CD4-positive, alpha-beta memory T cell (primary cell): ENCODE measurements at regions of chr5 and their contacts with region 1.

Region 1: DNA sequence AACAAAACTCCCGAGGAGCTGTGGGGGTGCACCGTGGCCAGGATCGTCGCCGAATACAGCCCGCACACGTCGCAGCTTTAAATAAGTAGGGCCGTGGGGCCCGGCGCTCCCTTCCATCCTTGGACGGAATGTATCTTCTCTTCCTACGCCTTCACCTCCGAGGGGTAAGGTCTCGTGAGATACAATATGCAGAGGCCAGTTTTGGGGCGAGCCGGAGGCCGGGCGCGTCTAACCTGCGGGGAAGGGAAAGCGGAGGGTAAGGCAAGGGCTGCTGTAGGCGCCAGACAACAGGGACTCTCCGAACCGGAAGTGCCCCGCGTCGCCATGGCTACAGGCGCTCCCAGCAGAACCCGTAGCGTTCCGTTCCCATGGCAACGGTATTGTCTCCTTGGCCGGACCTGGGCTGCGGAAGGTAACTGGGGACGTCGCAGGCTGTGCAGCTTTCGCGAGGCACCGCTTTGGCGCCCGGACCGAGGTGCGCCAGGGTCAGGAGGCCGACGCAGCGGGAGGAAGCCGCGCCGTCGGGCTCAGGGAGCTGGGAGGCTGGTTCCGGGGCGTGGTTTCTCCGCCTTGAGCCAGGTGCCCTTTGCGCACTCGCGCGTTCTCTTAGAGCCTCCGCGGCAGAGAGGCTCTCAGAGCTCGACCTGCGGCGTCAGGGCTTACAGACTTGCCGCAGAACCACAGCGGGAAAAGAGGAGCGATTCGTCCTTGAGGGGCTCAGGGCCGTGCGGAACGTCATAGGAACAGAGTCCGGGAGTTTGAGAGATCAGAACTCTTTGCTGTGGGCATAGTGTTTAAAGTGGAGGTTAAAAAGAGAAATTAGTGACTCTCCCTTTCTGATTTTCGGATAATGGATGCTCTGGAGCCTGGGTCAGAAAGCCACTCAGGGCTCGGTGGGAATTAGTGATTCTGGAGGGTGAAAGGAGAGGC is at the start of gene TTC23L:
- DNase-seq: peak; percentile 90 to 97 (median 91)
- H3K4me3 ChIP-seq: peak within 1 kb of the TSS; percentile 88 to 89
- H3K4me3 Mint-ChIP-seq: peak within 1 kb of the TSS; percentile 93 to 98 (median 95)
- H3K27ac ChIP-seq: peak within 1 kb of the TSS; percentile 70
- H3K27ac Mint-ChIP-seq: peak within 1 kb of the TSS; percentile 96 to 99 (median 98)
- H3K4me1 ChIP-seq: peaks cover 13% of the 10 kb centered on the region
- H3K4me1 Mint-ChIP-seq: peaks cover 4 to 16% (median 10%) of the 10 kb centered on the region in 4 donors
- H3K27me3 ChIP-seq: no peaks in the 10 kb centered on the region
- H3K27me3 Mint-ChIP-seq: peaks cover 0 to 2% of the 10 kb centered on the region in 2 donors
- total RNA-seq, gene TTC23L: 0.47 TPM in 1 of 2 experiments, not detected in the other

Region 2: GRCh38 chr5:34656001-34656699 is 182.9 kb before region 1 on chr5 and contains the start of gene RAI14:
- CTCF ChIA-PET with region 1: no interaction called
- POLR2A ChIA-PET with region 1: no interaction called
- intact Hi-C with region 1: loop called (anchors 2 kb)
- DNase-seq: peak in 4 of 5 donors; percentile 7 to 24 (median 12)
- H3K4me3 ChIP-seq: peak within 1 kb of the TSS; percentile 62 to 77
- H3K4me3 Mint-ChIP-seq: peak within 1 kb of the TSS; percentile 85 to 98 (median 95)
- H3K27ac ChIP-seq: peak within 1 kb of the TSS; percentile 11
- H3K27ac Mint-ChIP-seq: peak within 1 kb of the TSS; percentile 72 to 97 (median 87)
- H3K4me1 ChIP-seq: peaks cover 15% of the 10 kb centered on the region
- H3K4me1 Mint-ChIP-seq: peaks cover 12 to 28% (median 22%) of the 10 kb centered on the region in 4 donors
- H3K27me3 ChIP-seq: peaks cover 6% of the 10 kb centered on the region
- H3K27me3 Mint-ChIP-seq: peaks cover 5 to 26% of the 10 kb centered on the region in 2 donors
- total RNA-seq, gene RAI14: 1.9 to 2.6 TPM